ENCODE measurements at regions of chr3 and their contacts with region 1.

Region 1: GRCh38 chr3:137946345-137946973 is 63.5 kb upstream of the CLDN18 start:
- DNase-seq: peak; percentile 57
- ATAC-seq: peak; percentile 49
- H3K4me3 Mint-ChIP-seq: no peak overlapping the region
- H3K27ac Mint-ChIP-seq: no peak overlapping the region
- H3K4me1 Mint-ChIP-seq: no peaks in the 10 kb centered on the region
- H3K27me3 Mint-ChIP-seq: no peaks in the 10 kb centered on the region

Region 2: GRCh38 chr3:137032465-137033120 is 913.9 kb before region 1 on chr3:
- CTCF ChIA-PET with region 1: interaction called, 29 read pairs
- DNase-seq: peak; percentile 86
- ATAC-seq: peak; percentile 91
- H3K4me3 Mint-ChIP-seq: peak overlapping the region; percentile 47
- H3K27ac Mint-ChIP-seq: no peak overlapping the region
- H3K4me1 Mint-ChIP-seq: peaks cover 8% of the 10 kb centered on the region
- H3K27me3 Mint-ChIP-seq: peaks cover 37% of the 10 kb centered on the region

Region 3: GRCh38 chr3:137105277-137105977 is 841.0 kb before region 1 on chr3:
- CTCF ChIA-PET with region 1: interaction called, 10 read pairs
- DNase-seq: no peak
- ATAC-seq: no peak
- H3K4me3 Mint-ChIP-seq: no peak overlapping the region
- H3K27ac Mint-ChIP-seq: no peak overlapping the region
- H3K4me1 Mint-ChIP-seq: no peaks in the 10 kb centered on the region
- H3K27me3 Mint-ChIP-seq: peaks cover 17% of the 10 kb centered on the region

Measured in activated CD8-positive, alpha-beta memory T cell treated with anti-CD3 and anti-CD28 coated beads, Interleukin-2, amount 10 ng/mL, durations not matched to agents 7 days and 5 days (primary cell).